CD4-positive, alpha-beta memory T cell (primary cell): ENCODE measurements at regions of chr13 and their contacts with region 1.

Region 1: GRCh38 chr13:19071161-19071936 is 110.3 kb downstream of the TUBA3C start:
- DNase-seq: no peak
- H3K4me3 ChIP-seq: no peak overlapping the region
- H3K4me3 Mint-ChIP-seq: no peak overlapping the region
- H3K27ac ChIP-seq: no peak overlapping the region
- H3K27ac Mint-ChIP-seq: no peak overlapping the region
- H3K4me1 ChIP-seq: no peaks in the 10 kb centered on the region
- H3K4me1 Mint-ChIP-seq: no peaks in the 10 kb centered on the region
- H3K27me3 ChIP-seq: no peaks in the 10 kb centered on the region
- H3K27me3 Mint-ChIP-seq: peaks cover 0 to 2% of the 10 kb centered on the region in 2 donors

Region 2: DNA sequence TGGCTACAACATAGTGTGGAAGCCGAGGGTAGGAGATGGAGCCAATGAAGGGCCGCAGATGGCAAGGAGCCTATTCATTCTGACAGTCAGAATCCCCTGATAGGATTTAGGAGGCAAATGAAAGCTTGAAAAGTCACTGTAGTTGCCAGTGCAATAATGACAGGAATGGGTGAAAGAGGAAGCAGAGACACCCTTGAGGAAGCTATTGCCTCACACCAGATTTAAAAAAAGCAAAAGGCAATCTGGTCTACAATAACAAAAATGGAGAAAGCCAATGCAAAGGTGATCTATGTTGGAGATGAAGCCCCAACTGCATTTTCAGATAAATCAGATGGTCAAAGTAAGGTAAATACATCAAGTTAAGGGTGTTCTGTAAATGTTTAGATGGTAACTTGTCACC is 48.2 kb before region 1 on chr13:
- CTCF ChIA-PET with region 1: no interaction called
- POLR2A ChIA-PET with region 1: no interaction called
- intact Hi-C with region 1: loop called (anchors 10 kb)
- DNase-seq: no peak
- H3K4me3 ChIP-seq: no peak overlapping the region
- H3K4me3 Mint-ChIP-seq: no peak overlapping the region
- H3K27ac ChIP-seq: no peak overlapping the region
- H3K27ac Mint-ChIP-seq: no peak overlapping the region
- H3K4me1 ChIP-seq: no peaks in the 10 kb centered on the region
- H3K4me1 Mint-ChIP-seq: no peaks in the 10 kb centered on the region
- H3K27me3 ChIP-seq: no peaks in the 10 kb centered on the region
- H3K27me3 Mint-ChIP-seq: no peaks in the 10 kb centered on the region

Region 3: DNA sequence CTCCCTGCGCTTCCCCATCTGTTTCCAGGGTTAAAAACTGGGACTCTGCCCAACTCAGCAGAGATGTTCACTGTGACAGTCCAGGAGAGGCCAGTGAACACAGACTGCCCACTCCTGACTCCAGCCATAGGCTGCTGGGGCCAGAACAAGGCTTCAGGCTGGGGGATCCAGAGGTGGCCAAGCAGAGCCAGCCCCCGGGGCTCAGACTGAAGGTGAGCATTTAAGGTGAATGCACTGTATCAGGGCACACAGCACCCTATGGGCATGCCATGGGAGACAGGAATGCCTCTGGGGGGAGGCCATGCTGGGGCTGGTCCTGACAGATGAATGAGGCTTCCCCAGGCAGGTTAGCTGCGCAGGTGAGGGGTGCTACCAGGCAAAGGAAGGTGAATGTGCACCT is 13.9 kb after region 1 on chr13:
- CTCF ChIA-PET with region 1: no interaction called
- POLR2A ChIA-PET with region 1: no interaction called
- intact Hi-C with region 1: no loop called
- DNase-seq: no peak
- H3K4me3 ChIP-seq: no peak overlapping the region
- H3K4me3 Mint-ChIP-seq: no peak overlapping the region
- H3K27ac ChIP-seq: no peak overlapping the region
- H3K27ac Mint-ChIP-seq: no peak overlapping the region
- H3K4me1 ChIP-seq: no peaks in the 10 kb centered on the region
- H3K4me1 Mint-ChIP-seq: no peaks in the 10 kb centered on the region
- H3K27me3 ChIP-seq: no peaks in the 10 kb centered on the region
- H3K27me3 Mint-ChIP-seq: peaks cover 0 to 2% of the 10 kb centered on the region in 2 donors

Region 4: DNA sequence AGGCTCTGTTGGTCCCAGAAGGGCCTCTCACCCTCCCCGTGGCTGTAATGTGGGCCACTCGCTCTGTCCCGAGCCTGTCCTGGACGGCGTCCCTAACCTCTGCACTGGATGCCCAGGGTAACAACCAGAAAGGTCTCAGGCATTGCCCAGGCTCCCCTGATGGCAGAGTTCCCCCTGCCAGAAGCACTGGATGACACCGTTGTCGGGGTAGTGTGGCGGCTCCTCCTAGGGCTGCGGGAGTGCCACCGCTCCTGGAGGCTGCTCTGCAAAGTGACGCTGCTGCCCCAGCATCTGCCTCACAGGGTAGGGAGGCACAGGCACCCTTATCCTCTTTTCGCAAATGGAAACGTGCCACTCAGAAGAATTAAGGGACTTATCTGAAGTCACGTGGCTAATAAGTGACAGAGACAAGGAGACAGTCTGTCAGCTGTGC is 594.1 kb after region 1 on chr13:
- CTCF ChIA-PET with region 1: no interaction called
- POLR2A ChIA-PET with region 1: no interaction called
- intact Hi-C with region 1: no loop called
- DNase-seq: no peak
- H3K4me3 ChIP-seq: no peak overlapping the region
- H3K4me3 Mint-ChIP-seq: no peak overlapping the region
- H3K27ac ChIP-seq: no peak overlapping the region
- H3K27ac Mint-ChIP-seq: peak overlapping the region in 3 of 7 donors; percentile 47 to 48 (median 47)
- H3K4me1 ChIP-seq: no peaks in the 10 kb centered on the region
- H3K4me1 Mint-ChIP-seq: peaks cover 0 to 9% (median 2%) of the 10 kb centered on the region in 4 donors
- H3K27me3 ChIP-seq: no peaks in the 10 kb centered on the region
- H3K27me3 Mint-ChIP-seq: no peaks in the 10 kb centered on the region